PC-3 (cell line): ENCODE measurements at regions of chr9 and their contacts with region 1.

Region 1: GRCh38 chr9:89021154-89021803 is 30.0 kb downstream of the S1PR3 start:
- DNase-seq: peak; percentile 87
- ATAC-seq: peak; percentile 92
- H3K4me3 ChIP-seq: no peak overlapping the region
- H3K27ac ChIP-seq: peak overlapping the region; percentile 79
- H3K4me1 ChIP-seq: peaks cover 30% of the 10 kb centered on the region
- H3K27me3 ChIP-seq: no peaks in the 10 kb centered on the region
- CTCF ChIP-seq: no peak

Region 2: GRCh38 chr9:89116064-89116804 is 95.0 kb after region 1 on chr9:
- CTCF ChIA-PET with region 1: no interaction called
- POLR2A ChIA-PET with region 1: no interaction called
- intact Hi-C with region 1: no loop called
- DNase-seq: no peak
- ATAC-seq: no peak
- H3K4me3 ChIP-seq: no peak overlapping the region
- H3K27ac ChIP-seq: no peak overlapping the region
- H3K4me1 ChIP-seq: no peaks in the 10 kb centered on the region
- H3K27me3 ChIP-seq: no peaks in the 10 kb centered on the region
- CTCF ChIP-seq: no peak

Region 3: DNA sequence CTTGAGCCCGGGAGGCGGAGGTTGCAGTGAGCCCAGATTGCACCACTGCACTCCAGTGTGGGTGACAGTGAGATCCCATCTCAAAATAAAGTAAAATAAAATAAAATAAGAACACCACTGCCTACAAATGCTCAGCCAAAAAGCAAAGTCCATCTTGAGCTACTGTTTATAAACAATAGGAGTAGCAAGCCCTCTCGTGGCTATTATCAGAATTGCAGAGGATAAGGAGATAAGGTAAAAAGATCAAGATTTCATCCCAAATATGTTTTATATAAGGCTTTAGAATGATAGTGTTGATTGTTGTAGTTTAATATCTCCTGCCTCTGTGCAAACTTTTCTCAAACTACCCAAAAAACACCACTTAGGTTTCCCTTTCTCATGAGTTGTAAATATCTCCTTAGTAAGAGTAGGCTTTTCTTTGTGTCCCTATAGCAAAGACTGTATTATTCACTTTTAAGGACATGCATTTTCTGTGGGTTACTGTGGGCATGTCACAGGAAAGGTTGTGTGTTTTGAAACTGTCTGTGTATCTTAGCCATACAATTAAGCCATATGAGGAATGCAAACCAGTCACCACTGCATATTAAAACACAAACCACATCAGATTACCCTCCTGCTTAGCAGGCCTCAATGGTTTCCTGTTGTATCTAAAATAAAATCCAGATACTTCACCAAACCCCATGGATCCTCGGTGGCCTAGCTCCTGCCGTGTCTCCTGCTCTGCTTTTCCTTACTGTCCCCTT is 257.9 kb after region 1 on chr9:
- CTCF ChIA-PET with region 1: no interaction called
- POLR2A ChIA-PET with region 1: no interaction called
- intact Hi-C with region 1: loop called (anchors 10 kb)
- DNase-seq: peak; percentile 78
- ATAC-seq: peak; percentile 51; the same call in 1 of the 2 replicates
- H3K4me3 ChIP-seq: no peak overlapping the region
- H3K27ac ChIP-seq: no peak overlapping the region
- H3K4me1 ChIP-seq: no peaks in the 10 kb centered on the region
- H3K27me3 ChIP-seq: no peaks in the 10 kb centered on the region
- CTCF ChIP-seq: peak; percentile 70